Posterior vena cava (tissue), 2 donors: ENCODE measurements at regions of chr1 and their contacts with region 1.

Region 1: DNA sequence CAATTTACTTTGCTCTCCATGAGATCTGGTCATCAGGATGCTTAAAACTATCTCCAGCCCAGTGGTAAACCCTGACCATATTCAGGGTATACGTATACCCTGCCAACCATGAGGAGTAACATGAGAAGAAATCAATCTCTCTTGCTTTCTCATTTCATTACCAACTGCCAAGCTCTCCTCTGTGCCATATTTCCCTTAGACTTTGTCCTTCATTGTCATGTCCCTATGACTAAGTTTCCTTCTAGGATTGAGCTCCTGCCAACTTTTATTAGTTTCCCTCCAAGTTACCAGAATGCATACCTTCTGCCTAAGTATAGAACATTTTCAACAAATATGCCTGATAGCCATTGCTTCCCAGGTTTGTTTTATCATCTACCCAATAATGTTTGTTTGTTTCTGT is 1113.9 kb upstream of the B3GALT2 start:
- DNase-seq: no peak

Region 2: GRCh38 chr1:194289569-194290266 is 10.6 kb before region 1 on chr1:
- intact Hi-C with region 1: loop called in 1 of 2 experiments (anchors 1 kb)
- DNase-seq: no peak

Region 3: DNA sequence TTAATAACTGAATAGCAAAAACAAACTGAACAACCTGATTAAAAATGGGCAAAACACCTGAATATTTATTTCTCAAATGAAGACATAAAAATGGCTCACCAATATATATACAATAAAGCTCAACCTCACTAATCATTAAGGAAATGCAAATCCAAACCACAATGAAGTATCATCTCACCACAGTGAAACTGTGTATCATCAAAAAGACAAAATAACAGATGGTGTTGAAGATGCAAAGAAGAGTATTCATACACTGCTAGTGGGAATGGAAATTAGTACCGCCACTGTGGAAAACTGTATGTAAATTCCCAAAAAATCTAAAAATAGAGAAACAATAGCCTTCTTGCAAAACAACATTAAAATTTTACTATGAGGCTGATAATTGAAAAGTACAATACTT is 546.1 kb after region 1 on chr1:
- intact Hi-C with region 1: no loop called
- DNase-seq: no peak